ENCODE measurements at regions of chr4 and their contacts with region 1.

Region 1: GRCh38 chr4:138680989-138681604 is 334.5 kb upstream of the NOCT start:
- DNase-seq: peak; percentile 50 to 82
- ATAC-seq: peak; percentile 54

Region 2: GRCh38 chr4:138864961-138865720 is 184.0 kb after region 1 on chr4:
- intact Hi-C with region 1: loop called in 1 of 2 experiments (anchors 10 kb)
- DNase-seq: no peak
- ATAC-seq: no peak